ENCODE measurements at regions of chr20 and their contacts with region 1.

Region 1: DNA sequence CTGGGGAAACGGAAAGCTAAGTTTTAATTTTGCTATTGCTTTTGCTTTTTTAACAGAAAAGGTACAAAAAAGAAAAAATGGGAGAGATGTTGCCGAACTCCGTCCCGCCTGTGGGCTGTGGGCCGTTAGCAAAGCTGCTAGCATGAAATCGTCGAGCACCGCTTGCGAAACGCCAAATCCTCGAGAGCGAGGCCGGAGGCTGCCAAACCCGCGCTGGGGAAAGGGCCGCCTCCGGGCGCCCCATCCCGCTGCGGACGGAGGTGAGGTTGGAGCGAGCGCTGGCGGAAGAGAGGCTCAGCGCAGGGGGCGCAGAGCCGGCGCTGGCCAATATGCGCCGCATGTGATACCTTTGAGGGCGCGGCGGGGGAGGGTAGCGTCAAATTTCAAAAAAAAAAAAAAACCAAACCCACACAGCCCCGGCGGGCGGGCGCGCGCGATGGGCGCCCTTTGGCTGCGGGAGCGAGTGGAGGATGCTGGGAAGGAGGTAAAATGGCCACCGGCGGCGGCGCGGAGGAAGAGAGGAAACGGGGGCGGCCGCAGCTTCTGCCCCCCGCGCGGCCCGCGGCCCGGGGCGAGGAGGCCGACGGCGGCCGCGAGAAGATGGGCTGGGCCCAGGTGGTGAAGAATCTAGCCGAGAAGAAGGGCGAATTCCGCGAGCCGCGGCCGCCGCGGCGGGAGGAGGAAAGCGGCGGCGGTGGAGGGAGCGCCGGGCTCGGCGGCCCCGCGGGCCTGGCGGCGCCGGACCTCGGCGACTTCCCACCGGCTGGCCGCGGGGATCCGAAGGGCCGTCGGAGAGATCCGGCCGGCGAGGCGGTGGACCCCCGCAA is at the start of gene ZCCHC3:
- DNase-seq: peak; percentile 85
- H3K4me3 Mint-ChIP-seq: peak within 1 kb of the TSS; percentile 99
- H3K27ac Mint-ChIP-seq: peak within 1 kb of the TSS; percentile 100
- H3K4me1 Mint-ChIP-seq: peaks cover 52% of the 10 kb centered on the region
- H3K27me3 Mint-ChIP-seq: no peaks in the 10 kb centered on the region
- total RNA-seq, gene ZCCHC3: 25.9 TPM in 2 replicates

Region 2: GRCh38 chr20:237489-237888 is 59.8 kb before region 1 on chr20:
- intact Hi-C with region 1: loop called (anchors 1 kb)
- DNase-seq: peak; percentile 29
- H3K4me3 Mint-ChIP-seq: peak overlapping the region; percentile 67
- H3K27ac Mint-ChIP-seq: peak overlapping the region; percentile 82
- H3K4me1 Mint-ChIP-seq: peaks cover 25% of the 10 kb centered on the region
- H3K27me3 Mint-ChIP-seq: peaks cover 4% of the 10 kb centered on the region

Region 3: GRCh38 chr20:324177-325044 is 27.1 kb after region 1 on chr20:
- intact Hi-C with region 1: loop called (anchors 1 kb)
- DNase-seq: peak; percentile 84
- H3K4me3 Mint-ChIP-seq: peak overlapping the region; percentile 91
- H3K27ac Mint-ChIP-seq: peak overlapping the region; percentile 84
- H3K4me1 Mint-ChIP-seq: peaks cover 25% of the 10 kb centered on the region
- H3K27me3 Mint-ChIP-seq: peaks cover 6% of the 10 kb centered on the region

Region 4: DNA sequence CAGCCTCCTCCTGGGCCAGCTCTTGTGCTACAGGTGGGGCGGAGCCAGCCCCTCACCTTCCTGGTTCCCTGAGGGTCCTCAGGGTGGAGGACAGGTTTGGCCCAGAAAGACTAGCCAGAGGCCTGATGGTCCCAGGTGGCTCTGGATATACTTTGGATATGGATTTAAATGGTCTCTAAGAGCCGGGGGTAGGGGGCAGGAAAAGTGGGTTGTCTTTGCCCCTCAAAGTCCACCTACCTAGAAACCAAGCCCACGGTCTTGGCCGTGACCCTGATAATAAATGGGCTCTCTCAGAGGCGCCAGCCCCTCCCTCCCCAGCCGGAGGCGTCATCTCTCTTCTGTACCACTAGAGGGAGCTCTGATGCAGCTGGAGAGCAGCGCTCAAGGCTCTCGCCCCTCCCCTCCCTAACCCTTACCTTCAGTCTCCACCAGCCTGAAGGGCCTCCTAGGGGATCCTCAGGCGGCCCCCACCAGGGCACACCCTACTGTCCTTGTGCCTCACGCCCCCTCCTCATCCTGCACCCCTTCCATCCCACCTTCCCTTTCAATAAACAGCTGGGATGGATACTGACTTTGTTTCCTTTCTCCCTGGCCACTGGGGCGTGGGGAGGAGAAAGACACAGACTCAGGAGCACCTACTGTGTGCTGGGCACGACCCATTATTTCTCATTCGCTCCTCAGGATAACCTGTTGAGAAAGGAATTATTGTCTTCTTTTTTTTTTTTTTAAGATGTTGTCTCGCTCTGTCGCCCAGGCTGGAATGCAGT is 57.2 kb after region 1 on chr20:
- intact Hi-C with region 1: no loop called
- DNase-seq: peak; percentile 77
- H3K4me3 Mint-ChIP-seq: no peak overlapping the region
- H3K27ac Mint-ChIP-seq: no peak overlapping the region
- H3K4me1 Mint-ChIP-seq: peaks cover 18% of the 10 kb centered on the region
- H3K27me3 Mint-ChIP-seq: no peaks in the 10 kb centered on the region

Region 5: GRCh38 chr20:381581-382290 is 84.4 kb after region 1 on chr20:
- intact Hi-C with region 1: loop called (anchors 1 kb)
- DNase-seq: peak; percentile 75
- H3K4me3 Mint-ChIP-seq: peak overlapping the region; percentile 81
- H3K27ac Mint-ChIP-seq: peak overlapping the region; percentile 68
- H3K4me1 Mint-ChIP-seq: peaks cover 22% of the 10 kb centered on the region
- H3K27me3 Mint-ChIP-seq: peaks cover 3% of the 10 kb centered on the region

Region 6: DNA sequence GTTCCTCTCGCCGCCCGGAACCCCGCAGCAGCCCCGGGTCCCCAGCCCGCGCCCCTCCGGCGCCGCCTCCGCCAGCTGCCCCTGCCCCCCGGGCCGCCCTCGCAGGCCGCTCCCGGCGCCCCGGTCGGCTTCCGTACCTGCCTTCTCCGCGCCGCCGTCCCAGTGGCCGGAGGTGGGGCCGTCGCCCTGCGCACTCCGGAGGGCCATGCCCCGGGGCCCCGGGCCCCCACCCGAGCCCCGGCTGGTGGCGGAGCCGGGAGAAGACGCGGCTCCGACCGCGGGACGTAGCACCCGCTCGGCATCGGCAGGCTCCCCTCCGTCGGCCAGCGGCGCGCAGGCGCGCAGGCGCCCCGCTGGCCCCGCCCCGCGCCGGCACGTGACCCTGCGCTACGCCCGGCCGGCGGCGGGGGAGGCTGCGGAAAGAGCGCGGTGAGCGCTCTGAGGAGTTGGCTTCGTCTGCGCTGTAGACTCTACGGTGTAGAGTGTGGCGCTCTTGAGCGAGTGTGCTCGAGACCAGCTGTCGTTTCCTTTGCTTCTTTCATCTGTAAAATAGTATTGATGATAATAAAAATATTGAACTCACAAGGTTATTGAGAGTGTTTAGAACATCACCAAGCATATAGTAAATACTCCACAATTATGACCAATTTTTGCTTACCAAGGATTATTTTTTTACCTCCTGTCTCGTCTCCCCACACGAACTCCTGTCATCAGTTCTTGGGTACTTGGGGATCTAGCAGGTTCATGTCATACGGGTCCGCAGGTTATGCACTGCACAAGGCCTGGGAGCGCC is 165.1 kb after region 1 on chr20 and contains the start of gene TBC1D20:
- intact Hi-C with region 1: loop called (anchors 5 kb)
- DNase-seq: peak; percentile 84
- H3K4me3 Mint-ChIP-seq: peak within 1 kb of the TSS; percentile 98
- H3K27ac Mint-ChIP-seq: peak within 1 kb of the TSS; percentile 94
- H3K4me1 Mint-ChIP-seq: peaks cover 44% of the 10 kb centered on the region
- H3K27me3 Mint-ChIP-seq: peaks cover 2% of the 10 kb centered on the region
- total RNA-seq, gene TBC1D20: 37.5 and 41.4 TPM in 2 replicates

Measured in activated T-helper 1 cell treated with anti-CD3 and anti-CD28 coated beads, Interleukin-12 subunit alpha, Interleukin-12 subunit beta, Interleukin-2, Interleukin-4 antibody, amounts not matched to agents 30 ng/mL and 10 ng/mL and 1 ng/mL, durations not matched to agents 14 hours and 24 hours and 36 hours (primary cell).